ENCODE measurements at regions of chr11 and their contacts with region 1.

Region 1: DNA sequence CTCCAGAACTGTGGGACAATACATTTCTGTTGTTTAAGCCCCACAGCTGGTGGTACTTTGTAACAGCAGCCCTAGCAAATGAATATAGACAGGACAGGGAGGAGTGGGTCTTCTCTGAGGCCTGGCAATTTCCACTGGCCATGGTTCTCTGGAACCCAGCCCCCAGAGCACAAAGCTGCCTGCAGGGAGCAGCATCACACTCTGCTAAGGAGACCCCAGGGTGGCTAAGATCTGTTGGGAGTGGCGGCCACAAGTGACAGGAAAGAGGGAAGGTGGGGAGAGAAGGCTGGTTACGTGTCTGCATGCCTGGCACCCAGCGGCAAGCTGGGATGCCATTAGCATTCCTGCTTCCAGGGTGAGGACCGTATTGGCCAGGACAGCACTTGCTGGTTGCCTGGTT is 211.9 kb downstream of the ST3GAL4 start:
- DNase-seq: no peak
- H3K4me3 ChIP-seq: no peak overlapping the region
- H3K27ac ChIP-seq: no peak overlapping the region
- H3K4me1 ChIP-seq: no peaks in the 10 kb centered on the region
- H3K27me3 ChIP-seq: no peaks in the 10 kb centered on the region
- CTCF ChIP-seq: no peak
- EP300 ChIP-seq: no peak
- POLR2A ChIP-seq: no peak

Region 2: DNA sequence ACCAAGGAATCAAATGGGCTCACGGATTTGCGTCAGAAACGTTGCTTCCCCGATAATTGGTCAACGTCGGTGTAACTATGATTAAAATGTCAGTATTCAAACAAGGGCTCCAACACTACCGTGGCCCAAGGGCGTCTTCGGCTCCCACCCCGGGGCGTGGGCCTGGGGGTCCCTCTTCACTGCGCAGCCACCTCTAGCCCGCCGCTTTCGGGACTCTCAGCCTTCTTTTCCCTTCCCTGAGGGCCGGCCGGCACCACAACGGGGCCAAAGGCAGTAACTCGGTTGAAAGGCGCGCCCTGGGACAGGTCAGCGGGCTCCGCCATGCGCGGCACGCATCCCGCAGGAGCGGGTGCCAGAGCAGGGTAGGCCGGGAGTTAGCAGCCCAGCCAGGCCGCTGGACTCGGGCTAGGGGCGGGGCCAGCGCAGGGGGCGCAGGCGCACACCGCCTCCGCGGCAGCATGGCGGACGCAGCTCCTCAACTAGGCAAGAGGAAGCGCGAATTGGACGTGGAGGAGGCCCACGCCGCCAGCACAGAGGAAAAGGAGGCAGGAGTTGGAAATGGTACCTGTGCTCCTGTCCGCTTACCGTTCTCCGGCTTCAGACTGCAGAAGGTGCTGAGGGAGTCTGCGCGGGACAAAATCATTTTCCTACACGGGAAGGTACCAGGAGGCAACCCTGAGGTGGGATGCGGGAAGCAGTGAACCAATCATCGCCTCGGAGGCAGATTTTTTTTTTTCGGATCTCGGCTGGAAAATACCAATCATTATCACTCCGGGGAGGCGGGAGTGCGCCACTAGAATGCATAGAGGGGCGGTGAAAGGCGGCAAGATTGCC is 263.6 kb before region 1 on chr11 and contains the start of gene DCPS:
- intact Hi-C with region 1: no loop called
- DNase-seq: peak; percentile 89 to 95 (median 91)
- H3K4me3 ChIP-seq: peak within 1 kb of the TSS; percentile 48
- H3K27ac ChIP-seq: peak within 1 kb of the TSS; percentile 66 to 79
- H3K4me1 ChIP-seq: peaks cover 6% of the 10 kb centered on the region
- H3K27me3 ChIP-seq: no peaks in the 10 kb centered on the region
- CTCF ChIP-seq: no peak
- EP300 ChIP-seq: no peak
- POLR2A ChIP-seq: peak; percentile 40
- total RNA-seq, gene DCPS: 6.6 to 17.2 (median 13.5) TPM

Region 3: DNA sequence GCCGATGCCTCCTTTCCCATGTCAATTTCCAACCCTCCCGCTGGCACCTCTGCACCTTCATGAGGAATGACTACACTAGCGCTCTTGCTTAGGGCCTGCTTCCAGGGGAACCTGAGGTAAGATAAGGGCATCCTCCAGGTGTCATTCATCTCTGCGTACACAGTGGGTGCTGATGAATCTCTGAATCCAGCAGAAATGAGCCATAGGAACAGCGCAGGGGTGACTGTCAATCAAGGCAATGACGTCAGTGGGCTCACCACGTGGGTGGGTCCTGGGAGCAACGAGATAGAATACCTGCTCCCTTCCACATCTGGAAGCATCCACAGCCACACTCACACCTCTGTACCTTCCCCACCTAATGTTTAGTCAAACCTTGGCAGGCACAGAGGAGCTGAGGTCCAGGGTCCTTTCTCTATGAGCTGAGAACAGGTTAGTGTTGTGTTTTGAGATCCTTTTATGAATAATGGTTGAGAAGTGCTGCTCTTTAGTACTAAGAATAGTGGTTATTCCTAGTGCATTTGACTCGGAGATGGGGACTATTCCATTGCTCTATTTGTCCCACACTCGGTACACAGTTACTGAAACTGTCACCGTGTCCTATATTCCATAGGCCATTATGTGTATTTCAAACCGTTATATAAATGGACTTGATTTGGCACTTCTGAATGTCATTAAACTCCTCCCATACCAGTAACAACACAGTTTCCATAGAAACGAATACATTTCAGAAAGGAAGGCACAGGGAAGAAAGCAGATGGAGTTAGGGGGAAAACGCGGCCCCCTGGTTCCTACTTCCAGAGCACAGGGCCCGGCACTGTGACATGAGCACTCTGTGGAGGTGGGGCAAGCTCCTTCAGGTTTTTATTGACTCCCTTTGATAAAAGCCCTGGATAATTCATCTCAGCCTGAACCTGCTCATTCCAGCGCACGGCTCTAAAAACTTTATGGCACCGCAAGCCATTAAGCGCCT is 18.6 kb before region 1 on chr11:
- intact Hi-C with region 1: loop called in 1 of 4 experiments (anchors 1 kb)
- DNase-seq: no peak
- H3K4me3 ChIP-seq: no peak overlapping the region
- H3K27ac ChIP-seq: no peak overlapping the region
- H3K4me1 ChIP-seq: peaks cover 6% of the 10 kb centered on the region
- H3K27me3 ChIP-seq: no peaks in the 10 kb centered on the region
- CTCF ChIP-seq: no peak
- EP300 ChIP-seq: no peak
- POLR2A ChIP-seq: no peak

Measured in ovary (tissue), 10 donors.